GM12878 (cell line): ENCODE measurements at regions of chr17 and their contacts with region 1.

Region 1: GRCh38 chr17:27544350-27545131 is 86.4 kb upstream of the LGALS9 start:
- DNase-seq: peak; percentile 96
- ATAC-seq: peak; percentile 86
- H3K4me3 ChIP-seq: no peak overlapping the region
- H3K27ac ChIP-seq: peak overlapping the region; percentile 48; the same call in 1 of the 2 replicates
- H3K4me1 ChIP-seq: peaks cover 68% of the 10 kb centered on the region
- H3K27me3 ChIP-seq: no peaks in the 10 kb centered on the region
- CTCF ChIP-seq: peak; percentile 12 to 31 (median 23); a peak in 4 of 6 replicates
- EP300 ChIP-seq: peak; percentile 90 to 95
- POLR2A ChIP-seq: no peak
- RAD21 ChIP-seq: no peak

Region 2: DNA sequence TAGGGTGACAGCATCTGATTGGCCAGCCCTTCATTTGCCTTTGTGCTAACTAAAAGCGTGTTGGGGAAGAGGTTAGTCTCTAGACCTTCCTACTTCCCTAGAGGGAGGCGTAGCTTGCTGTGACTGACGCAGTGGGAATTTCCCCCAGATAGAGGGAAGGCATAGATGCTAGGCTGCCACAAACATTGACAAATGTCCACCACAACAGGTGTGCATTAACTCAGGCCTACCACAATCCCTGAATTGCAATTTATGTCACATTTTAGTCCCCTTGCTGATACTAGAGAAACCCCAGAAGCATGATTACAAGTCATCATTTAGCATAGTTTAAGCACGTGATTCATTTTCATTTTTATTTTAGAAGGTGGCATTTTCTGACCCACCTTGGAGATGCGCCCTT is 326.9 kb before region 1 on chr17:
- CTCF ChIA-PET with region 1: interaction called, 3 read pairs
- POLR2A ChIA-PET with region 1: no interaction called
- RAD21 ChIA-PET with region 1: no interaction called
- SMC1A ChIA-PET with region 1: no interaction called
- in situ Hi-C with region 1: loop called (anchors 5 kb)
- intact Hi-C with region 1: no loop called
- DNase-seq: peak; percentile 89
- ATAC-seq: peak; percentile 88
- H3K4me3 ChIP-seq: no peak overlapping the region
- H3K27ac ChIP-seq: peak overlapping the region; percentile 72
- H3K4me1 ChIP-seq: peaks cover 38% of the 10 kb centered on the region
- H3K27me3 ChIP-seq: no peaks in the 10 kb centered on the region
- CTCF ChIP-seq: no peak
- EP300 ChIP-seq: peak; percentile 78 to 79; a peak in 3 of 4 replicates
- POLR2A ChIP-seq: no peak
- RAD21 ChIP-seq: no peak

Region 3: GRCh38 chr17:27455914-27456680 is 88.4 kb before region 1 on chr17 and contains the start of gene KSR1:
- CTCF ChIA-PET with region 1: interaction called, 31 read pairs
- POLR2A ChIA-PET with region 1: interaction called, 8 read pairs
- RAD21 ChIA-PET with region 1: interaction called, 113 read pairs
- SMC1A ChIA-PET with region 1: interaction called, 120 read pairs
- in situ Hi-C with region 1: no loop called
- intact Hi-C with region 1: no loop called
- DNase-seq: no peak
- ATAC-seq: peak; percentile 89
- H3K4me3 ChIP-seq: peak within 1 kb of the TSS; percentile 89
- H3K27ac ChIP-seq: peak within 1 kb of the TSS; percentile 38
- H3K4me1 ChIP-seq: peaks cover 16% of the 10 kb centered on the region
- H3K27me3 ChIP-seq: no peaks in the 10 kb centered on the region
- CTCF ChIP-seq: peak; percentile 38 to 56 (median 42); a peak in 5 of 6 replicates
- EP300 ChIP-seq: no peak
- POLR2A ChIP-seq: peak; percentile 75
- RAD21 ChIP-seq: peak; percentile 44
- polyA plus RNA-seq, gene KSR1: 0.97 to 1.7 TPM

Region 4: DNA sequence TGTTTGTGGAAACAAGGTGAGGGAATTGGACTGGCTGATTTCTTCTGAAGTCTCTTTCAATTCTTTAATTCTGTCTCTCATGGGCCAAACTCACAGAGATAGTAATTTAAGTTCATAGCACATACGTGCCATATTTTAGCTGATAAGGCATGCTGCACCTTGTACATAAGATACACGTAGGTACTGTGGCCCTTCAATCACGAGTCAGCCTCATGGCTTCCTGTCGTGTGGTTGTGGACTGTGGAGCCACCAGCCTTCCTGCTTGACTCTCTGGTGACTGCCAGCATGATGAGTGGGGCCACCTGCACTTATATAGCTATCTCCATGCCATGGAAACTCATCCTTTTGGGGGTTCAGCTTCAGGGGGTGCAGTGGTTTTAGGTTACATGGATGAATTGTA is 63.2 kb before region 1 on chr17:
- CTCF ChIA-PET with region 1: interaction called, 3 read pairs
- POLR2A ChIA-PET with region 1: interaction called, 7 read pairs
- RAD21 ChIA-PET with region 1: interaction called, 98 read pairs
- SMC1A ChIA-PET with region 1: interaction called, 77 read pairs
- in situ Hi-C with region 1: no loop called
- intact Hi-C with region 1: loop called (anchors 1 kb)
- DNase-seq: no peak
- ATAC-seq: peak; percentile 64
- H3K4me3 ChIP-seq: no peak overlapping the region
- H3K27ac ChIP-seq: peak overlapping the region; percentile 43
- H3K4me1 ChIP-seq: peaks cover 39% of the 10 kb centered on the region
- H3K27me3 ChIP-seq: no peaks in the 10 kb centered on the region
- CTCF ChIP-seq: no peak
- EP300 ChIP-seq: peak in 1 of 2 experiments; percentile 28; a peak in 1 of 4 replicates
- POLR2A ChIP-seq: peak; percentile 43; the same call in 1 of the 2 replicates
- RAD21 ChIP-seq: no peak

Region 5: GRCh38 chr17:27519550-27519949 is 25.0 kb before region 1 on chr17:
- CTCF ChIA-PET with region 1: interaction called, 8 read pairs
- POLR2A ChIA-PET with region 1: interaction called, 8 read pairs
- RAD21 ChIA-PET with region 1: interaction called, 62 read pairs
- SMC1A ChIA-PET with region 1: interaction called, 77 read pairs
- in situ Hi-C with region 1: no loop called
- intact Hi-C with region 1: loop called (anchors 2 kb)
- DNase-seq: peak; percentile 51
- ATAC-seq: peak; percentile 83
- H3K4me3 ChIP-seq: no peak overlapping the region
- H3K27ac ChIP-seq: peak overlapping the region; percentile 75
- H3K4me1 ChIP-seq: peaks cover 36% of the 10 kb centered on the region
- H3K27me3 ChIP-seq: no peaks in the 10 kb centered on the region
- CTCF ChIP-seq: no peak
- EP300 ChIP-seq: no peak
- POLR2A ChIP-seq: no peak
- RAD21 ChIP-seq: 0 out of 2 replicates have a peak, but pooled peaks have one; percentile 6

Region 6: GRCh38 chr17:27569257-27569722 is 24.7 kb after region 1 on chr17:
- CTCF ChIA-PET with region 1: interaction called, 19 read pairs
- POLR2A ChIA-PET with region 1: no interaction called
- RAD21 ChIA-PET with region 1: interaction called, 8 read pairs
- SMC1A ChIA-PET with region 1: interaction called, 29 read pairs
- in situ Hi-C with region 1: no loop called
- intact Hi-C with region 1: no loop called
- DNase-seq: no peak
- ATAC-seq: peak; percentile 96
- H3K4me3 ChIP-seq: no peak overlapping the region
- H3K27ac ChIP-seq: no peak overlapping the region
- H3K4me1 ChIP-seq: no peaks in the 10 kb centered on the region; the same call in 1 of the 2 replicates
- H3K27me3 ChIP-seq: no peaks in the 10 kb centered on the region
- CTCF ChIP-seq: peak; percentile 64 to 78 (median 73)
- EP300 ChIP-seq: no peak
- POLR2A ChIP-seq: no peak
- RAD21 ChIP-seq: peak; percentile 55